ENCODE measurements at regions of chr2 and their contacts with region 1.

Region 1: GRCh38 chr2:105749583-105750400 is 5.1 kb downstream of the NCK2 start:
- DNase-seq: peak; percentile 36
- H3K4me3 ChIP-seq: no peak overlapping the region
- H3K27ac ChIP-seq: peak overlapping the region; percentile 8 to 97 (median 93)
- H3K4me1 ChIP-seq: peaks cover 10 to 64% (median 32%) of the 10 kb centered on the region in 4 donors
- H3K27me3 ChIP-seq: no peaks in the 10 kb centered on the region
- CTCF ChIP-seq: no peak
- EP300 ChIP-seq: no peak
- POLR2A ChIP-seq: no peak

Region 2: DNA sequence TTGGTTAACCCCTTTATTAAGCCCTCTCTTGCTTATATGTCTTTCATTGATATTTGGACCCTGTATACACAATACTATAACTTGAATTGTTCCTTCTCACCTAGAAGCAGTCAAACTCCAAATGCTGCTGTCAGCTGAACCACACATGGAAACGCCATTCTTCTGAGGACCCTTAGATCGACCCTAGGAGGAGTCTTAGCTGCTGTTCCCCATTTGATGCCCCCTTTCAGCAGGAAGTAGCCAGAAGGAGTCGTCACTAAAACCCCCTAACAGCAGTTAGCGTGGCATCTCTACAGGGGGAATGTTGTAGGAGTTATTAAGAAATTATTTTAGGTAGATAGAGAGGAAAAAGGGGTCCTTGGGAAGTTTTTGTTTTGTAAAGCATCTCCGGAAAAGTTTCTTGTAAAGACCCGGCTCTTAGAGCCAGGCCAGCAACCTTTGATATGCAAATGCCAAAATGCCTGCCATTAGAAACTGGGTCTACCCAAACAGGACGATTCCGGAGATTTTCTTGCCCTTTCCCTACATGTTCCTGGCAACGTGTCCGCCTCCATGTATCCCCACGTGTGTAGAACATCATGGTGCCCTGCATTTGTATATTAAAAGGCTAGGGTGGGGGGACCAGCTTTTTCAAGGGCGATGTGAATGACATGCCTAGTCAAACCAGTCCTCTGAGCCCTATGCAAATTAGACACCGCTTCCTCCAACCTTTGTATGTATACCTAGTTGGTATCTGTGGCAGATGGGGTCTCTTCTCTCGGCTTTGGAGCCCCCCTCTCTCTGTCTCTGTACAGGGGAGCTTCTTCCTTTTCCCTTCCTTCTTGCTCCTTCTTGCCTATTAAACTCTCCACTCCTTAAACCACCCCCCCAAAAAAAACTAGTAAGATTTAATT is 1534.3 kb before region 1 on chr2:
- in situ Hi-C with region 1: no loop called
- intact Hi-C with region 1: no loop called
- DNase-seq: no peak
- H3K4me3 ChIP-seq: no peak overlapping the region
- H3K27ac ChIP-seq: no peak overlapping the region
- H3K4me1 ChIP-seq: no peaks in the 10 kb centered on the region
- H3K27me3 ChIP-seq: no peaks in the 10 kb centered on the region
- CTCF ChIP-seq: no peak
- EP300 ChIP-seq: no peak
- POLR2A ChIP-seq: no peak

Region 3: DNA sequence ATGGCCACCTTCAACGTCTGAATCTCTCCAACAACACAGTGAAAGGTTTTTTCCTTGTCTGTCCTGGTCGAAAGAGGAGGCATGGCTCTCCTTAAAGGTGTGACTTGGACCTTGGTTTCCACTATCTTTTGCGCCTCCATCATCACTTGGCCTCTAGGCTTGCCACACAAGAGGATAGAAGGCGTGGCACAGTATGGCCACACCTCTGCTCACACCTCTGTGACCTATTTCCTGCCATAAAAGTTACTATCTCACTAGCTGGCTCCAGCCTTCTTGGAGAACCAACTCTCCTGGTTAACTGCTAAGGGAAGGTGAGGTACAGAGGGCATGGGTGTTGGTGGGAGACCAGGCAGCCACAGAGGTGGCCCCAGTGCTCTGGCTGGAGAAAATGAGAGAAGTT is 278.4 kb after region 1 on chr2:
- in situ Hi-C with region 1: no loop called
- intact Hi-C with region 1: loop called (anchors 2 kb)
- DNase-seq: peak; percentile 23
- H3K4me3 ChIP-seq: no peak overlapping the region
- H3K27ac ChIP-seq: no peak overlapping the region
- H3K4me1 ChIP-seq: peaks cover 0 to 22% (median 11%) of the 10 kb centered on the region in 4 donors
- H3K27me3 ChIP-seq: no peaks in the 10 kb centered on the region
- CTCF ChIP-seq: no peak
- EP300 ChIP-seq: no peak
- POLR2A ChIP-seq: no peak

Measured in transverse colon (tissue), 4 donors.